A549 (cell line): ENCODE measurements at regions of chr9 and their contacts with region 1.

Region 1: DNA sequence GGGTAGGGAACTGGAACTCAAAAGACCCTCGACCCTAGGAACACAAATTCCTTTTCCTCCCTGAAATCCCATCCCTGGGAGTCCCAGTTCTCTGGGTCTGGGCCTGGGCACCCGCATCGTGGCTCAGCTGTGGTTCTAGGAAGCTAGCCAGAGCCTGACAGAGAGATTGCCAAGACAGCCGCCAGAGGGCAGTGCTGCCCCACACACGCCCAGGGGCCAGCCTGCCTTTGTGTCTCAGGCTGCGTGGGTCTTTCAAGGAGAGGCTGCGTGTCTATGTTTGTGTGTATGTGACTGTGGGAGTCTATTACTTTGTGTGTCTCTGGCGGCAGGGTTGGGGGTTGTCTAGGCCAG is 32.0 kb upstream of the TTLL11 start:
- DNase-seq: peak; percentile 71 to 87
- ATAC-seq: peak; percentile 83 to 91
- H3K4me3 ChIP-seq: no peak overlapping the region
- H3K27ac ChIP-seq: peak overlapping the region; percentile 7 to 38; a peak in 2 of 6 replicates
- H3K4me1 ChIP-seq: peaks cover 10% of the 10 kb centered on the region; the same call in 2 of the 3 replicates
- CTCF ChIP-seq: peak; percentile 95
- EP300 ChIP-seq: no peak
- POLR2A ChIP-seq: no peak
- RAD21 ChIP-seq: peak; percentile 97 to 98

Region 2: GRCh38 chr9:122092611-122093506 is 32.3 kb before region 1 on chr9 and contains the start of gene TTLL11:
- CTCF ChIA-PET with region 1: interaction called, 385 read pairs
- POLR2A ChIA-PET with region 1: no interaction called
- DNase-seq: peak; percentile 91 to 93
- ATAC-seq: peak; percentile 92 to 96
- H3K4me3 ChIP-seq: peak within 1 kb of the TSS; percentile 84
- H3K27ac ChIP-seq: peak within 1 kb of the TSS; percentile 67 to 85
- H3K4me1 ChIP-seq: peaks cover 10% of the 10 kb centered on the region; the same call in 2 of the 3 replicates
- CTCF ChIP-seq: no peak
- EP300 ChIP-seq: no peak
- POLR2A ChIP-seq: peak; percentile 27
- RAD21 ChIP-seq: no peak
- polyA plus RNA-seq, gene TTLL11: 2.6 and 3.0 TPM in 2 replicates

Region 3: DNA sequence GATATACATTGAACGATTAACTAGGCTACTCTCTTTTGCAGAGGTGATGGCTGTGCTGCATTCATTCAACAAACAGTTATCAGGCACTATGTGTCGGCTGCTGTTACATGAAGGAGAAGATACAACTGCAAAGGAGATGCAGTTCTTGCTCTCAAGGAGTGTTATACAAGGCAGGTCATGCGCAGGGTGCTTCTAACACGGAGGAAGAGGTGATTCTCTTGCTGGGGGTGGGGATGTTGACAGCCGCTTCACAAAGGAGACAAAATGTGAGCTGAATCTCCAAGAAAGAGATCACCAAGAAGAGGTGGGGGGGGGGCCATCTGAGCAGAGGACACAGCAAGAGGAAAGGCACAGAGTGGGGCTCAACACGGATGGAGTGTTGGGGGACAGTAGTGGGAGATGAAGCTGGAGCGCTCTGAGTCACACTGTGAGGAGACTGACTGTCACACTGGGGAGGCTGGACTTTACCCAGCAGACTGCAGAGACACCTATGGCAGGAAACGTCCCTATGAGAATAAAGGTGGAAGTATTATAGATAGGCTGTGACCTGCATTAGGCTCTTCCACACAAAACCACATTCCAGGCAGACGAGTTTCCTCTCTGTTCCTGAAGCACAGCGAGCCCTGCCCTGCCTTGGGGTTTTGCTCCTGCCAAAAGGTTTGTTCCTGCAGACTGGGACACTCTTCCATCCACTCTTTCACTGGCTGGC is 13.6 kb after region 1 on chr9:
- CTCF ChIA-PET with region 1: interaction called, 97 read pairs
- POLR2A ChIA-PET with region 1: no interaction called
- DNase-seq: no peak
- ATAC-seq: no peak
- H3K4me3 ChIP-seq: no peak overlapping the region
- H3K27ac ChIP-seq: no peak overlapping the region
- H3K4me1 ChIP-seq: no peaks in the 10 kb centered on the region
- CTCF ChIP-seq: no peak
- EP300 ChIP-seq: no peak
- POLR2A ChIP-seq: no peak
- RAD21 ChIP-seq: no peak

Region 4: DNA sequence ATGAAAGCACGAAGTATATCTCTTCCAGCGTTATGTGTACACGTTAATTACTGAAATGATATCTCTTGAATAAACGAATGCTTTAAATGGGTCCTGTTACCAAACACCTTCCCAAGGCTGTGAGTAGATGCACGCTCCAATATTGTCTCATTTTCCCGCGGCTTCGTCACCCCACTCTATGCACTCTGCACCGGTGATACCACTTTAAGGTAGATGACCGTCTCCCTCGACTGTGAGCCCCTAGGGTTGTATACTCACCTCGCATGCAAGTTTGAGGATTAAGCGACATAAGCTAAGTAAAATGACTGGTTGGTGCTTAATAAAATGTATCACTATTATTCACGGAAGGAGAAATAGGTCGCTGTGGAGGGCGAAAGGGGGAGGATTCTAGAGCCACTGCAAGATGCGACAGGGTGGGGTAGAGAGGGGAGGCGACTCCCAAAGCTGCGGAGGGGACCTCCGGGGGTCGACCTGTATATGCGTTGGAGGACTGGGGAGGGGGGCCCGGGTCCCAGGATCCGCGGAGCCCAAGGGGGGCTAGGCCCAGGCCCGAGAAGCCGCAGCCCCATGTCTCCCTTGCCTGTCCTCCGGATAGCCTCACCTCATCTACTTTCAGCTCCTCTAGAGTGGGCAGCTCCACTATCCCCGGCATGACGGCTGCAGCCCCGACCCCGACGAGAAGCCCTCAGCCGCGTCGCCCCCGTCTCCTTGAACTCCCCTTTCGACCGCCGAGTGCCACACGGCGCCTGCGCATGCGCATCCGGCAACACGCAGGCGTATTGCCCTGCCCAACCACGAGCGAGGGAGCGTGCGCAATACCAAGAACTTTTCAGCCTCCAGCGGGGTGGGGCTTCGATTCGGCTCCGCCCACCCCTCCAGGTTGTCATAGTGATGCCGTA is 34.1 kb after region 1 on chr9 and contains the starts of genes MORN5 and NDUFA8:
- CTCF ChIA-PET with region 1: interaction called, 48 read pairs
- POLR2A ChIA-PET with region 1: no interaction called
- DNase-seq: peak; percentile 94 to 98
- ATAC-seq: peak; percentile 97
- H3K4me3 ChIP-seq: peak within 1 kb of the TSS; percentile 95
- H3K27ac ChIP-seq: peak within 1 kb of the TSS; percentile 91 to 94
- H3K4me1 ChIP-seq: peaks cover 13% of the 10 kb centered on the region; the same call in 1 of the 3 replicates
- CTCF ChIP-seq: no peak
- EP300 ChIP-seq: no peak
- POLR2A ChIP-seq: peak; percentile 94
- RAD21 ChIP-seq: no peak
- polyA plus RNA-seq, gene MORN5: 0.17 TPM in 1 of 2 replicates, not detected in the other
- polyA plus RNA-seq, gene NDUFA8: 94.9 and 120 TPM in 2 replicates

Region 5: GRCh38 chr9:122286764-122287163 is 161.6 kb after region 1 on chr9:
- CTCF ChIA-PET with region 1: interaction called, 11 read pairs
- POLR2A ChIA-PET with region 1: no interaction called
- DNase-seq: no peak
- ATAC-seq: no peak
- H3K4me3 ChIP-seq: no peak overlapping the region
- H3K27ac ChIP-seq: no peak overlapping the region
- H3K4me1 ChIP-seq: no peaks in the 10 kb centered on the region
- CTCF ChIP-seq: no peak
- EP300 ChIP-seq: no peak
- POLR2A ChIP-seq: no peak
- RAD21 ChIP-seq: no peak

Region 6: DNA sequence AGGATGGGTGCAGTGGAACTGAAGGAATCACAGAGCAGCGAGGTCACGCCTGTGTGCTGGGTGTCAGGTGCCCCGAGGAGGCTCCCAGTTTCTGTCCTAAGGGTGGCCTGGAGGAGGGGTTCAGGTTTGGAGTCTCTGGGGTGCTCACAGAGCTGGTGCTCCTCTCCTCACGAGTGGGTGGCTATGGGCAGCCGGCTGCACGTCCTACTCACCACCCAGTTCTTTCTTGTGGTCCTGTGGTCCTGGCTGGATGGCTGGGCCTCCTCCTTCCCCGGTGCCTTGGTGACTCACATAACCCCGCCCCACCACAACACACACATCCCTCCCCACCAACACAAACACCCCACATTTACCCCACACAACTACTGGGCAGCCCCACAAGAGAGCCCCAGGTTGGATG is 235.8 kb after region 1 on chr9:
- CTCF ChIA-PET with region 1: interaction called, 541 read pairs
- POLR2A ChIA-PET with region 1: no interaction called
- DNase-seq: no peak
- ATAC-seq: peak in 1 of 2 experiments; percentile 32; a peak in 3 of 6 replicates
- H3K4me3 ChIP-seq: no peak overlapping the region
- H3K27ac ChIP-seq: peak overlapping the region in 1 of 2 experiments; percentile 7; a peak in 1 of 6 replicates
- H3K4me1 ChIP-seq: peaks cover 10% of the 10 kb centered on the region; the same call in 2 of the 3 replicates
- CTCF ChIP-seq: no peak
- EP300 ChIP-seq: no peak
- POLR2A ChIP-seq: no peak
- RAD21 ChIP-seq: no peak